HEK293 (cell line): ENCODE measurements at regions of chr21 and their contacts with region 1.

Region 1: GRCh38 chr21:29351691-29352090 is 53.0 kb downstream of the BACH1 start:
- H3K4me3 ChIP-seq: no peak overlapping the region
- H3K27ac ChIP-seq: no peak overlapping the region
- H3K4me1 ChIP-seq: no peaks in the 10 kb centered on the region
- CTCF ChIP-seq: no peak

Region 2: DNA sequence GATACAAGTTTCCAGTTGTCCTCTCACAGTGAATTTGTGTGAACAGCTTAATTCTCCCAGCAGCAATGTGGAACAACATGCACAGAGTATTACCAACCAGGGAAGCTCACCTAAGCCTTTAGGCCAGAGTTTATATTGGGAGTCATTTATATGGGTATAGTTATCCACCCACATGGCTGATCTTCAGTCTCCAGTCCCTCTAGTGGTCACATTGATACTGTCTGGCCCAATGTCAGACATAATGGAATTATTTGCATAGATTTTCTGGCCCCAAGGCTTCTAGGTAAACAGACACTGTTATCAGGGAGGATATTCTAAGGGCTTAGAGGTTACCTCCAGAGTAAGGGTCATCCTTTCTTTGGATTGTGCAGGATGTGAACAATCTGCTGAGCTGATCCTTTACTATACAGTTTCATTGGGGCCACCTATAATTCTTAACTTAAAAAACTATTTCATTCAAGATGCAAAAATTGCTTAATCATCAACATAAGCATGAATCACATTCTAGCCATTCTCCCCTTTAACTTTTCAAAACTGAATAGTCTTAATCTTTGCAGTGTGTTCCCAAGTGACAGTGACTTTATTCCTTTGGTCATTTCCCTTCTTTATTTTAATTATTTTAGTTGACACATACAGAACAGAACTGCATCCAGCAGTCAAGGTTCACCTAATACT is 570.0 kb before region 1 on chr21:
- CTCF ChIA-PET with region 1: no interaction called
- POLR2A ChIA-PET with region 1: no interaction called
- H3K4me3 ChIP-seq: no peak overlapping the region
- H3K27ac ChIP-seq: no peak overlapping the region
- H3K4me1 ChIP-seq: no peaks in the 10 kb centered on the region
- CTCF ChIP-seq: 0 out of 2 replicates have a peak, but pooled peaks have one; percentile 13

Region 3: DNA sequence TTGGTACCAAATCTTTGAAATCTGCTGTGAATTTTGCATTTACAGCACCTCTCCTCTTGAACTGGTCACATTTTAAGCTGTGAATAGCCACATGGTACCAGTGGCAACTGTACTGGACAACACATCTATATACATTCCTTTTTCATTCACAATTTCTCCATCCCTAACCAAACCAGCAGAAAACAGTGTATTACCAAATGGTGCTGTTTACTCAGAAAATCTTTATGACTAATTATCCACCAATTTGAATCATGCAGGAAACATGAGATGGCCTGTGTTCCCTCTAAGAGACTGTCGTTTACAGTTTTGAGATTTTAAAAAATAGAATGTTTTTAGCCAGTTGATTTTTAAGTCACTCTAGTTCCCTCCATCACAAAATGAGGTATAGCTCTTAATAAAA is 260.7 kb before region 1 on chr21:
- CTCF ChIA-PET with region 1: interaction called, 44 read pairs
- POLR2A ChIA-PET with region 1: no interaction called
- H3K4me3 ChIP-seq: no peak overlapping the region
- H3K27ac ChIP-seq: no peak overlapping the region
- H3K4me1 ChIP-seq: no peaks in the 10 kb centered on the region
- CTCF ChIP-seq: no peak

Region 4: DNA sequence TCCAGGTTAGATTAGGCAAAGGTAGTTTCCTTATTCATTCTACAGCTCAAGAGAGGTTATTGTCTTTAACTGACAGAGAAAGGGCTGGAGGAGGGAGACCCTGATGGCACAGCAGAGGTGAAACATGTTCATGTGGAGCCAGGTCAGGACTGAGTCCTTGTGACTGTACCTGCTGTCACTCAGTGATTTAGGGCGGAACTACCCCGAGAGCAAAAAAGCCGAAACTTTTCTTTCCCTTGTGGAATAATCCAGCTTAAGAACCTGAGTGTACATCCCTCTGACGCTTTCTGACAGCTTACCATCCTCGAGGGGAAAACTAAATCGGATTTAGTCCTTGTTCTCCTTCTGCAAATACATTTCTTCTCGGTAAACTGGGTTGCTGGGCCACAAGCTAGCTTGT is 220.3 kb after region 1 on chr21:
- CTCF ChIA-PET with region 1: no interaction called
- POLR2A ChIA-PET with region 1: no interaction called
- H3K4me3 ChIP-seq: no peak overlapping the region
- H3K27ac ChIP-seq: no peak overlapping the region
- H3K4me1 ChIP-seq: no peaks in the 10 kb centered on the region
- CTCF ChIP-seq: no peak